Activated CD8-positive, alpha-beta T cell treated with anti-CD3 and anti-CD28 coated beads, Interleukin-2, amount 10 ng/mL, durations not matched to agents 7 days and 5 days (primary cell): ENCODE measurements at regions of chr17 and their contacts with region 1.

Region 1: DNA sequence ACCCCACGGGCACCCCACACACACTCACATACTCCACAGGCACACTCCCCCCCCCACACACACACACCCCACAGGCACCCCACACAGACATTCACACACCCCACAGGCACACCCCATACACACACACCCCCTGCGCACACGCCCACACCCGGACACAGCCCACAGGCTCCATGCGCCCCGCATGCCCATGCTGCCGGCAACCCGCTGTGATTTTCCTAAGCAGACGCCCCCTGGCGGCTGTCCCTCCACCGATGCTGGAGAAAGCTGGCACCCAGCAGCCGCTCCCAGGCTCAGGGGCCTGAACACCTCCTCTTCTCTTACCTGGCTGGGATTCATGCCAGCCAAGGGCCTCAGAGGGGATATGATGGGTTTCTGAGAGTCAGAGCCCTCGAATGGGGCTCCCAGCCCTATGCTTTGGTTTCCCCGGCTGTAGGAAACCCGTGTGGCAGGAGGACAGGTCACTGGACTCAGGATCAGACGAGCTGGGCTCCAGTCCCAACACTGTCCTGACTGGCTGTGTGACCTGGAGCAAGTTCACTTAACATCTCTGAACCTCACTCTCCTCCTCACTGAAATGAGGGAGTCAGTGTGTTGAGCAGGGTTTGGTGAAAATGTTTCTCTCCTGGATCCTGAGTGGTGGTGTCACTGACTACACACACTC is 19.6 kb upstream of the TNFRSF13B start:
- DNase-seq: peak; percentile 83
- ATAC-seq: peak; percentile 58
- H3K4me3 Mint-ChIP-seq: no peak overlapping the region
- H3K27ac Mint-ChIP-seq: no peak overlapping the region
- H3K4me1 Mint-ChIP-seq: peaks cover 34% of the 10 kb centered on the region
- H3K27me3 Mint-ChIP-seq: peaks cover 9% of the 10 kb centered on the region

Region 2: DNA sequence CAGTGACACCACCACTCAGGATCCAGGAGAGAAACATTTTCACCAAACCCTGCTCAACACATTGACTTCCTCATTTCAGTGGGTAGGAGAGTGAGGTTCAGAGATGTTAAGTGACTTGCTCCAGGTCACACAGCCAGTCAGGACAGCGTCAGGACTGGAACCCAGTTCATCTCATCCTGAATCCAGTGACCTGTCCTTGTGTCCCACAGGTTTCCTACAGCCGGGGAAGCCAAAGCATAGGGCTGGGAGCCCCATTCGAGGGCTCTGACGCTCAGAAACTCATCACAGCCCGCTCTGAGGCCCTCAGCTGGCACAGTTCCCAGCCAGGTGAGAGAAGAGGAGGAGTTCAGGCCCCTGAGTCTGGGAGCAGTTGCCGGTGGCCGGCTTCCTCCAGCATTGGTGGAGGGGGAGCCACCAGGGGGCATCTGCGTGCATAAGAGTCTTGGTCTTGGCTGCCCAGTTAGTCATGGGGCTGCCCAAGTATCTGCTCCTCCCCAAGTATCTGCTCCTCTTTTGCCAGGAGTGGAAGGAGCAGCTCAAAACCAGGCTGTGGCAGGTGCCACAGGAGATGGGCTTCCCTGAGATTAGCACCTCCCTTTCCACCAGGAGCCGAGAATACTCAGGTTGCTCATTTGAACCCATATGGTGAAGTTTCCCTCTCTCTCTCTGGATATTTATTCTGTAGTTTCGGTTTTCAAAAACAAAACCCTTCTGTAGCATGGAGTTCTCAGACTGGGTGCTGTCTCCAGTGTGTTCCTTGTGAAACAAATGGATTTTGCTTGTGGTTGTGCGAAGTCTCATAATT is 75.5 kb before region 1 on chr17:
- CTCF ChIA-PET with region 1: interaction called, 21 read pairs
- POLR2A ChIA-PET with region 1: no interaction called
- DNase-seq: peak; percentile 53
- ATAC-seq: peak; percentile 68
- H3K4me3 Mint-ChIP-seq: no peak overlapping the region
- H3K27ac Mint-ChIP-seq: no peak overlapping the region
- H3K4me1 Mint-ChIP-seq: peaks cover 7% of the 10 kb centered on the region
- H3K27me3 Mint-ChIP-seq: peaks cover 3% of the 10 kb centered on the region

Region 3: DNA sequence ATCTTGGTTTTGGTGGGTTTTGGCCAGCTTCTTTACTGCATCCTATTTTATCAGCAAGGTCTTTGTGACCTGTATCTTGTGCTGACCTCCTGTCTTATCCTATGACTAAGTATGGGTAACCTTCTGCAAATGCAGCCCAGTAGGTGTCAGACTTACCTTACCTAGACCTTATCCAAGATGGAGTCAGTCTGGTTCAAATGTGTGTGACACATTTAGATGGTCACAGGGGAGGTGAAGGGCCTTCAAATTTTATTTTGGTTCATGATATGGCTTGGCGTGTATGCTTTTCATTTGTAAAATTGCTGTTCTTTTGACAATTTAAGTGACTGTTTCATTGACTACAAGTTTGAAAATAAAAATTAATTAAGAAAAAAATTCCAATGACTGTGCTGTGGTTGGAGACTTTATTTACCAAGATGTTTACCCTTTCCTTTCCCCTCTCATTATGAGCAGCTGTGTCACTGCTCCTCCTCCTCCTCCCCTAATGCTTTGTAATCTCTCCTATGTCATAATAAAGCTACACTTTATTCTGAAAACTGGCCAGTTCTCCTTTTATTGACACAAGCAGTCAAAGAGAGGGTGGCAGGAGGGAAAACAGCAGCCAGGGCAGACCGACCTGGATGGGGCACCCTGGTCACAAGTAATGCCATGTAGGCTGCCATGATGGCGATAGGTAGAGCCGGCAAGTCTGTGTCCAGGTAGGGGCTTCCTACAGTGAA is 68.9 kb before region 1 on chr17:
- CTCF ChIA-PET with region 1: interaction called, 21 read pairs
- POLR2A ChIA-PET with region 1: no interaction called
- DNase-seq: peak; percentile 28
- ATAC-seq: no peak
- H3K4me3 Mint-ChIP-seq: no peak overlapping the region
- H3K27ac Mint-ChIP-seq: no peak overlapping the region
- H3K4me1 Mint-ChIP-seq: no peaks in the 10 kb centered on the region
- H3K27me3 Mint-ChIP-seq: no peaks in the 10 kb centered on the region

Region 4: GRCh38 chr17:16962818-16963217 is 28.7 kb before region 1 on chr17:
- CTCF ChIA-PET with region 1: no interaction called
- POLR2A ChIA-PET with region 1: no interaction called
- DNase-seq: no peak
- ATAC-seq: no peak
- H3K4me3 Mint-ChIP-seq: no peak overlapping the region
- H3K27ac Mint-ChIP-seq: no peak overlapping the region
- H3K4me1 Mint-ChIP-seq: no peaks in the 10 kb centered on the region
- H3K27me3 Mint-ChIP-seq: peaks cover 34% of the 10 kb centered on the region

Region 5: GRCh38 chr17:16977932-16978331 is 13.5 kb before region 1 on chr17:
- CTCF ChIA-PET with region 1: interaction called, 11 read pairs
- POLR2A ChIA-PET with region 1: interaction called, 4 read pairs
- DNase-seq: no peak
- ATAC-seq: no peak
- H3K4me3 Mint-ChIP-seq: no peak overlapping the region
- H3K27ac Mint-ChIP-seq: no peak overlapping the region
- H3K4me1 Mint-ChIP-seq: peaks cover 15% of the 10 kb centered on the region
- H3K27me3 Mint-ChIP-seq: peaks cover 6% of the 10 kb centered on the region

Region 6: DNA sequence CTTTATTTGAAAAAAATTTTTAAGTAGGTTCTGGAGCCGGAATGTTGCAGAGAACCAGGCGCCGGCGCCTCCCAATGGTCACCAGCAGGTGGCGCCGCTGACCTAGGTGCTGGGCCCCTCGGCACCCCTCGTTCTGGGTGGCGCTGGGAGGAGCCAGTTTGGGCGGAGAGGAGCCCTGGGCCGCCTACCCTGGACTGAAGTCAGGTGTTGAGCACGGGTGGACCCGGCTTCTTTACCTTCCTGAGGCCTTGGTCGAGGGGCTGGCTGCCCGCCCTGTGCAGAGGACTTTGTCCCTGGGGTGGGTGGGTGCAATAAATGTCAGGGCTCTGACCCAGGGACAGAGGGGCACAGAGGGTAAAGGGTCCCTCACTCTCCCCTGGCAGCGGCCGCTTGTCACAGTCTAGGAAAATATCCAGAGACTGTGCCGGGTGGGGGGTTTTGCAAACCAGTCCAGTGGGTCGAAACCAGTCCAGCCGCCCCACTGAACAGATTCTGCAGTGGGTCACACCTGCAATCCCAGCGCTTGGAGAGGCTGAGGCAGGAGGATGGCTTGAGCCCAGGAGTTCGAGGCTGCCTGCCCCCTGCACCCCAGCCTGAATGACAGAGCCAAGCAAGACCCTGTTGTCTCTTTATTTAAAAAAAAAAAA is 10.5 kb after region 1 on chr17:
- CTCF ChIA-PET with region 1: interaction called, 11 read pairs
- POLR2A ChIA-PET with region 1: interaction called, 3 read pairs
- DNase-seq: peak; percentile 84
- ATAC-seq: peak; percentile 96
- H3K4me3 Mint-ChIP-seq: no peak overlapping the region
- H3K27ac Mint-ChIP-seq: no peak overlapping the region
- H3K4me1 Mint-ChIP-seq: peaks cover 4% of the 10 kb centered on the region
- H3K27me3 Mint-ChIP-seq: no peaks in the 10 kb centered on the region

Region 7: GRCh38 chr17:17165666-17166308 is 174.3 kb after region 1 on chr17:
- CTCF ChIA-PET with region 1: no interaction called
- POLR2A ChIA-PET with region 1: no interaction called
- DNase-seq: no peak
- ATAC-seq: no peak
- H3K4me3 Mint-ChIP-seq: no peak overlapping the region
- H3K27ac Mint-ChIP-seq: no peak overlapping the region
- H3K4me1 Mint-ChIP-seq: peaks cover 4% of the 10 kb centered on the region
- H3K27me3 Mint-ChIP-seq: no peaks in the 10 kb centered on the region

Region 8: GRCh38 chr17:17239832-17240231 is 248.4 kb after region 1 on chr17:
- CTCF ChIA-PET with region 1: no interaction called
- POLR2A ChIA-PET with region 1: no interaction called
- DNase-seq: no peak
- ATAC-seq: no peak
- H3K4me3 Mint-ChIP-seq: no peak overlapping the region
- H3K27ac Mint-ChIP-seq: no peak overlapping the region
- H3K4me1 Mint-ChIP-seq: peaks cover 26% of the 10 kb centered on the region
- H3K27me3 Mint-ChIP-seq: peaks cover 3% of the 10 kb centered on the region